Gastrocnemius medialis (tissue), 4 donors: ENCODE measurements at regions of chr6 and their contacts with region 1.

Region 1: DNA sequence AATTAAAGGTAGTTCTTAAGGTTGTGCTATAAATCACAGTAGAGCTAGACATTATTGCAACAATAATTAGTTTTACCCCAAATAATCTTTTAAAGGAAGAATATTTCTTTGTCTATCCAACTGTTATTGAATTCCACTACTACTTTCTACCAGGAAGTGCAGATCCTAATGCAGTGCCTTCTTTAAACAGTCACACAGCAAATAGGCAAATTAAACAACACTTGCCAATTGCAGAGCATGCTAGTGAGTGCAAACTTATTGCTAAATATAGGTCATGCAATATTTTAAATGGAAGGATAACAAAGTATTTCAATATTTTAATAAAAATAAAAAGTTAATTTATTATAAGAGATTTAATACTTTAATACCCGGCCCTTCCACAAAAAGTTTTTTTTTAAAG is 107.3 kb upstream of the BCLAF1 start:
- DNase-seq: no peak
- ATAC-seq: no peak
- H3K4me3 ChIP-seq: no peak overlapping the region
- H3K27ac ChIP-seq: no peak overlapping the region
- H3K4me1 ChIP-seq: no peaks in the 10 kb centered on the region
- H3K27me3 ChIP-seq: no peaks in the 10 kb centered on the region
- CTCF ChIP-seq: no peak
- POLR2A ChIP-seq: no peak

Region 2: GRCh38 chr6:135572051-135572450 is 824.9 kb before region 1 on chr6:
- in situ Hi-C with region 1: no loop called
- intact Hi-C with region 1: loop called (anchors 5 kb)
- DNase-seq: no peak
- ATAC-seq: no peak
- H3K4me3 ChIP-seq: no peak overlapping the region
- H3K27ac ChIP-seq: no peak overlapping the region
- H3K4me1 ChIP-seq: no peaks in the 10 kb centered on the region
- H3K27me3 ChIP-seq: no peaks in the 10 kb centered on the region
- CTCF ChIP-seq: no peak
- POLR2A ChIP-seq: no peak